ENCODE measurements at regions of chr16 and their contacts with region 1.

Region 1: GRCh38 chr16:66406534-66407221 is 20.4 kb upstream of the BEAN1 start:
- DNase-seq: peak; percentile 83 to 92
- ATAC-seq: peak; percentile 87 to 94
- H3K4me3 ChIP-seq: peak overlapping the region; percentile 61
- H3K27ac ChIP-seq: peak overlapping the region; percentile 86 to 88
- H3K4me1 ChIP-seq: peaks cover 27% of the 10 kb centered on the region
- CTCF ChIP-seq: peak; percentile 87
- EP300 ChIP-seq: no peak
- POLR2A ChIP-seq: peak; percentile 37
- RAD21 ChIP-seq: peak; percentile 98

Region 2: DNA sequence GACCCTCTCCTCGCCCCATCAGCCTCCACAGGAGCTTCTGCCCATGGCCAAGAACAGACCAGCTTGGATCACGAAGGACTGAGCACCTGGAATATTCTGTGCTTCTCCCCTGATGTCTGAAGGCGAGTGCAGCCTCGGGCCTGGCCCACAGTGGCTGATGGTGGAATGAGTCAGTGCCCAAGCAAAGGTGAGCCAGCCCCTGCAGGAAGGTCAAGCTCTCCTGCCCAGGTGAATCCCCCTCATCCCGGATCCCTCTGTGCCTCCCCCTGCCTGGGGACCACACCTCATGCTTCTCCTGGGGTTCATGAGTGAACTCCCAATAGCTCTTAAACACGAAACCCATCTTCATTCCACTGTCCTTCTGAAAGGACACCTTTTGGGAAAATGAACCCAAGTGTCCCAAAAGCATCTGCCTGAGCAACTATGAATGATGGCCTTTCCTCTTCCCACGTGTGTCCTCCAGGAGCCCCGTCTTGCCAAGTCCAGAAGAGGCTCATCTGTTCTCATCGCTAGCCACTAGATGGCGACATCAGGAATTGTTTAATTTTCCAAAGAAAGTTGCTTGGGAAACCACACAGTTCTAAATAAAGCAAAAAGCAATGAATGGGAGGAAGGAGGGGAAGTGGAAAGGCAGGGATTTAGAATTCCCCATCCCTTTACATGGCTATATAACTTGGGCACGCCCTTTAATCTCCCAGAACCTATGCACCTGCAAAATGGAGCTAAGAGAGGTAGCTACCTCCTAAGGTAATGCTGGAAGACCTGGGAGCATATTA is 49.3 kb before region 1 on chr16:
- CTCF ChIA-PET with region 1: interaction called, 28 read pairs
- POLR2A ChIA-PET with region 1: no interaction called
- DNase-seq: peak; percentile 84 to 89
- ATAC-seq: peak; percentile 60 to 83
- H3K4me3 ChIP-seq: no peak overlapping the region
- H3K27ac ChIP-seq: no peak overlapping the region
- H3K4me1 ChIP-seq: peaks cover 12% of the 10 kb centered on the region; the same call in 2 of the 3 replicates
- CTCF ChIP-seq: peak; percentile 74
- EP300 ChIP-seq: no peak
- POLR2A ChIP-seq: no peak
- RAD21 ChIP-seq: peak; percentile 47 to 65

Region 3: DNA sequence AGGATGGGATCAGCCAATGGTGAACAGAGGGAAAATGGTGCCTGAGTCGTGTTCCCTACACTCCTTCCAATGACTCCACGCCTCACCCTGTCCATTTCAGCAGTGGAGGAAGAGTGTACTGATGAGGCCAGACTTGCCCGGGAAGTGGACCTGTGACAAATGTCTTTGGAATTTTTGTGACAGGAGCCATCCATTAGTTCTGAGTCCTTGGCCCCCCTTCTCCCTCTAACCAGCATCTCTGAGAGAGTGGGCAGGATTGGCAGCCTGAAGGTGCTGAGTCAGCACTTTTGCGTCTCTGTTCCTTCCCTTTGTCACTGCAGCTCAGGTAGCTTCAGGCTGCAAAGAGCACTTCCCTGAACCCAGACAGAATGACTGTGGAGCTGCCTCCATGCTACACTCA is 51.2 kb after region 1 on chr16:
- CTCF ChIA-PET with region 1: interaction called, 17 read pairs
- POLR2A ChIA-PET with region 1: interaction called, 3 read pairs
- DNase-seq: peak in 1 of 2 experiments; percentile 20
- ATAC-seq: peak; percentile 30 to 38; a peak in 2 of 6 replicates
- H3K4me3 ChIP-seq: no peak overlapping the region
- H3K27ac ChIP-seq: no peak overlapping the region
- H3K4me1 ChIP-seq: 0 out of 3 replicates have a peak, but pooled peaks cover 3% of the 10 kb centered on the region
- CTCF ChIP-seq: no peak
- EP300 ChIP-seq: no peak
- POLR2A ChIP-seq: no peak
- RAD21 ChIP-seq: no peak

Region 4: DNA sequence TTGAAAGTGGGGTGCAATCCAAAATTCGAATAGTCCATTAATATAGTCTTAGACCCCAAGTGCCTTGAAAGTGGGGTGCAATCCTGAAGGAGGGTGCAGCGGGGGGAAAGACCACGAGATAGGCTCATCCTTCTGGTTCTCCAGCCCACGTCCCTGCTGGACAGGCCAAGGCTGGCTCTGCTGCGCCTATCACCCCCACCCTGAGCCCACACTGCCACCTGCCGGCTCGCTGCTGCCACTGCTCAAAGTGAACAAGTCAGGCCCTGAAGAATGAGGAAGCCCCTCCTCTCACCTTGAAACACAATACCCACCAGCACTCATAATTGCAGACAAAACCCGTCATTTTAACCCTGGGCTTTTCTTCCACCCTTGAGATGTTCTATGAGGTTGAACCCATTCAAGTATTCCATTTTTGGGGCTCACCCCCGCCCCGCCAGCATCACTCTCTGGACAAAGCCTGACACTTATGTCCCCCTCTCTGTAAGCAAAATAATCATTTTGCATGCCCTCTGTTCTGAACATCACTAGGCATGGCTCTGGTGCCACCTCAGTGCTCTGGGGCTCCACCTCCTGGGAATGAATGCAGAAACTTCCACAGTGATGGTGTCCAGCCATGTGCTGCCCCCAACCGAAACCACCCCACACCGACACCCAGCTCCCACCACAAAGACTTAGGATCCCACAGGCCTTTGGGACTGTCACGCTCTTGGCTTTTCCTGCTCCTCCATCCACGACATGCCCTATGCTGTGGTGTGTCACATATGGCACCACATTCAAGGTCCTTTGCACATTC is 77.2 kb after region 1 on chr16:
- CTCF ChIA-PET with region 1: interaction called, 185 read pairs
- POLR2A ChIA-PET with region 1: no interaction called
- DNase-seq: peak; percentile 80
- ATAC-seq: peak; percentile 71 to 89
- H3K4me3 ChIP-seq: no peak overlapping the region
- H3K27ac ChIP-seq: peak overlapping the region; percentile 64 to 79; a peak in 5 of 6 replicates
- H3K4me1 ChIP-seq: peaks cover 26% of the 10 kb centered on the region
- CTCF ChIP-seq: peak; percentile 92
- EP300 ChIP-seq: no peak
- POLR2A ChIP-seq: no peak
- RAD21 ChIP-seq: peak; percentile 91 to 93

Region 5: GRCh38 chr16:66552286-66553177 is 145.9 kb after region 1 on chr16 and contains the start of gene CKLF:
- CTCF ChIA-PET with region 1: interaction called, 10 read pairs
- POLR2A ChIA-PET with region 1: interaction called, 7 read pairs
- DNase-seq: peak; percentile 90 to 92
- ATAC-seq: peak; percentile 72 to 81
- H3K4me3 ChIP-seq: peak within 1 kb of the TSS; percentile 51
- H3K27ac ChIP-seq: peak within 1 kb of the TSS; percentile 90 to 91
- H3K4me1 ChIP-seq: peaks cover 40% of the 10 kb centered on the region
- CTCF ChIP-seq: no peak
- EP300 ChIP-seq: no peak
- POLR2A ChIP-seq: peak; percentile 80
- RAD21 ChIP-seq: no peak
- polyA plus RNA-seq, gene CKLF: 85.1 and 96.5 TPM in 2 replicates

Region 6: GRCh38 chr16:66872943-66873684 is 466.4 kb after region 1 on chr16:
- CTCF ChIA-PET with region 1: interaction called, 24 read pairs
- POLR2A ChIA-PET with region 1: no interaction called
- DNase-seq: peak; percentile 89 to 92
- ATAC-seq: peak; percentile 94 to 98
- H3K4me3 ChIP-seq: peak overlapping the region; percentile 37
- H3K27ac ChIP-seq: peak overlapping the region; percentile 79 to 82
- H3K4me1 ChIP-seq: peaks cover 5% of the 10 kb centered on the region; the same call in 2 of the 3 replicates
- CTCF ChIP-seq: peak; percentile 93
- EP300 ChIP-seq: no peak
- POLR2A ChIP-seq: peak; percentile 56
- RAD21 ChIP-seq: peak; percentile 46 to 61

Measured in A549 (cell line).